ENCODE measurements at regions of chr4 and their contacts with region 1.

Region 1: GRCh38 chr4:81919238-81919637 is 447.5 kb upstream of the RASGEF1B start:
- DNase-seq: peak; percentile 27
- H3K4me3 ChIP-seq: no peak overlapping the region
- H3K27ac ChIP-seq: no peak overlapping the region
- H3K4me1 ChIP-seq: no peaks in the 10 kb centered on the region
- H3K27me3 ChIP-seq: no peaks in the 10 kb centered on the region
- CTCF ChIP-seq: peak; percentile 32 to 47

Region 2: GRCh38 chr4:82201805-82202641 is 282.8 kb after region 1 on chr4:
- CTCF ChIA-PET with region 1: no interaction called
- dilution Hi-C with region 1: no loop called
- in situ Hi-C with region 1: no loop called
- intact Hi-C with region 1: loop called (anchors 5 kb)
- DNase-seq: peak; percentile 29
- H3K4me3 ChIP-seq: no peak overlapping the region
- H3K27ac ChIP-seq: no peak overlapping the region
- H3K4me1 ChIP-seq: peaks cover 11% of the 10 kb centered on the region
- H3K27me3 ChIP-seq: no peaks in the 10 kb centered on the region
- CTCF ChIP-seq: peak; percentile 70 to 81